Lower leg skin (tissue), 4 donors: ENCODE measurements at regions of chr7 and their contacts with region 1.

Region 1: DNA sequence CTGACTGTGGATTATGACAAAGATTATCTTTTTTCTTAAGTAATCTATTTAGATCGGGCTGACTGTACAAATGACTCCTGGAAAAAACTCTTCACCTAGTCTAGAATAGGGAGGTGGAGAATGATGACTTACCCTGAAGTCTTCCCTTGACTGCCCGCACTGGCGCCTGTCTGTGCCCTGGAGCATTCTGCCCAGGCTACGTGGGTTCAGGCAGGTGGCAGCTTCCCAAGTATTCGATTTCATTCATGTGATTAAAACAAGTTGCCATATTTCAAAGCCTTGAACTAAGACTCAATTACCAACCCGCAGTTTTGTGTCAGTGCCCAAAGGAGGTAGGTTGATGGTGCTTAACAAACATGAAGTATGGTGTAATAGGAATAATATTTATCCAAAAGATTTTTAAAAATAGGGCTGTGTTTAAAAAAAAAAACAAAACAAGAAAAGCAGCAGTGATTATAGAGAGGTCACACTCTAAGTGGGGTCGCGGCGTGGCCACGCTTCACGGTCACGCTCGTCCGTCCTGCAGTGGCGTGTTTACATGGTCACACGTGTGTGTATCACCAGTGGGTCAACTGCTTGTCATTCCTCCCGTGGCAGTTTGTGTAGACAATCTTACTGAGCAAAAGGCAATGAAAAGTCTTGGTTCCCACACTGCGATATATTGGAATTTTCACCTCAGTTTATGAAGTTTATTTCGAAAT is 10.8 kb downstream of the INSIG1 start:
- DNase-seq: no peak
- H3K4me3 ChIP-seq: no peak overlapping the region
- CTCF ChIP-seq: no peak
- POLR2A ChIP-seq: no peak

Region 2: GRCh38 chr7:155283565-155284194 is 24.8 kb before region 1 on chr7:
- intact Hi-C with region 1: loop called (anchors 2 kb)
- DNase-seq: no peak
- H3K4me3 ChIP-seq: no peak overlapping the region
- CTCF ChIP-seq: no peak
- POLR2A ChIP-seq: no peak

Region 3: GRCh38 chr7:156178214-156178613 is 869.7 kb after region 1 on chr7:
- intact Hi-C with region 1: no loop called
- DNase-seq: peak in 1 of 2 donors; percentile 73
- H3K4me3 ChIP-seq: no peak overlapping the region
- CTCF ChIP-seq: no peak
- POLR2A ChIP-seq: no peak